Activated CD4-positive, alpha-beta T cell treated with anti-CD3 and anti-CD28 coated beads for 36 hours (primary cell): ENCODE measurements at regions of chr1 and their contacts with region 1.

Region 1: DNA sequence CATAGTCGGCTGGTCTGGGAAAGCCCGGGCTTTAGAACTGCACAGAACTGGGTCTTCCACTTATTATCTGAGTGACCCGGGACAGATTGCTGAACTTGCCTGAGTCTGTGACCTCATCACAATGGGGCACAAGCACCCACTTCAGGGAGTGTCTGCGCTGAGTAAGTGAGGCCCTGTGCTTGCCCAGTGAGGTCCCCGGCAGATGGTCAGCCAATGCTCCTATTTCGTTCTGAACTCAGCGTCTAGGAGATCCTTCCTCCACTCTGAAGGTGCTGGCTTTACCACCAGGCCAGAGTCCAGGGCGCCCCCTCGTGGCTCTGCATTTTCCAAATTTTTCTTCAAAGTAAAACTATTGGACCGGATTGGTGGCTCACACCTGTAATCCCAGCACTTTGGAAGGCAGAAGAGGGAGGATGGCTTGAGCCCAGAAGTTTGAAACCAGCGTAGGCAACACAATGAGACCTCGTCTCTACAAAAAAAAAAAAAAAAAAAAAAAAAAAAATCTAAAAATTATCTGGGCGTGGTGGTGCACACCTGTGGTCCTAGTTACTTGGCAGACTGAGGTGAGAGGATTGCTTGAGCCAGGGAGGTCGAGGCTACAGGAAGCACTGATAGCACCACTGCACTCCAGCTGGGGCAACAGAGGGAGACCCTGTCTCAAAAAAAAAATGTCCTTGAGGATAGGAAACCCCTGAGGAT is 61.7 kb downstream of the FCRL5 start:
- DNase-seq: peak; percentile 83
- ATAC-seq: no peak
- H3K4me3 Mint-ChIP-seq: no peak overlapping the region
- H3K27ac Mint-ChIP-seq: no peak overlapping the region
- H3K4me1 Mint-ChIP-seq: no peaks in the 10 kb centered on the region
- H3K27me3 Mint-ChIP-seq: peaks cover 20% of the 10 kb centered on the region

Region 2: DNA sequence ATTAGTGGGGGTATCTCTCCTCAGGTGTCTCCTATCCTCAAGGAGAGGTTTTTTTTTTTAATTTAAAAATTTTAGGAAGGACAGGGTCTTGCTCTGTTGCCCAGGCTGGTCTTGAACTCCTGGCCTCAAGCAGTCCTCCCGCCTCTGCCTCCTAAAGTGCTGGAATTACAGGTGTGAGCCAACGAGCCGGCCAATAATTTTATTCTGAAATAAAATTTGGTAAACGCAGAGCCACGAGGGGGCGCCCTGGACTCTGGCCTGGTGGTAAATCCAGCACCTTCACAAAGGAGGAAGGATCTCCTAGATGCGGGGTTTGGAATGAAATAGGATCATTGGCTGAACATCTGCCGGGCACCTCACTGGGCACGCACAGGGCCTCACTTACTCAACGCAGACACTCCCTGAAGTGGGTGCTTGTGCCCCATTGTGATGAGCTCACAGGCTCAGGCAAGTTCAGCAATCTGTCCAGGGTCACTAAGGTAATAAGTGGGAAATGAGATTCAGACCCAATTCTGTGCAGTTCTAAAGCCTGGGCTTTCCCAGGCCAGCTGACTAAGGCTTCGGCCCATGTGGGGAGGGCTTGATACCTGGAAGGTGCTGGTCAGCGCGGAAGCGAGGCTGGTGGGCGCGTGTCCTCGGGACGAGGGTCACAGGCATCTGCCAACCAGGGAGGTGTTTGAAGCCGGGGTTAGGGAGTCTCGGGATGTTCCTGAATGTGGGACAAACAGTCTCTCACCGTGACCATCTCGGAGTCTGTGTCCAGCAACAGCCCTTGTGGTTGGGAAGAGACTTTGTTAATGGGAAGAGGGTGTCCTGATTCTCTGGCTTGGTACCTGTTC is 319.7 kb before region 1 on chr1:
- CTCF ChIA-PET with region 1: interaction called, 6 read pairs
- POLR2A ChIA-PET with region 1: no interaction called
- intact Hi-C with region 1: loop called in 1 of 2 experiments (anchors 2 kb)
- DNase-seq: peak; percentile 74
- ATAC-seq: no peak
- H3K4me3 Mint-ChIP-seq: no peak overlapping the region
- H3K27ac Mint-ChIP-seq: no peak overlapping the region
- H3K4me1 Mint-ChIP-seq: no peaks in the 10 kb centered on the region
- H3K27me3 Mint-ChIP-seq: peaks cover 13% of the 10 kb centered on the region

Region 3: DNA sequence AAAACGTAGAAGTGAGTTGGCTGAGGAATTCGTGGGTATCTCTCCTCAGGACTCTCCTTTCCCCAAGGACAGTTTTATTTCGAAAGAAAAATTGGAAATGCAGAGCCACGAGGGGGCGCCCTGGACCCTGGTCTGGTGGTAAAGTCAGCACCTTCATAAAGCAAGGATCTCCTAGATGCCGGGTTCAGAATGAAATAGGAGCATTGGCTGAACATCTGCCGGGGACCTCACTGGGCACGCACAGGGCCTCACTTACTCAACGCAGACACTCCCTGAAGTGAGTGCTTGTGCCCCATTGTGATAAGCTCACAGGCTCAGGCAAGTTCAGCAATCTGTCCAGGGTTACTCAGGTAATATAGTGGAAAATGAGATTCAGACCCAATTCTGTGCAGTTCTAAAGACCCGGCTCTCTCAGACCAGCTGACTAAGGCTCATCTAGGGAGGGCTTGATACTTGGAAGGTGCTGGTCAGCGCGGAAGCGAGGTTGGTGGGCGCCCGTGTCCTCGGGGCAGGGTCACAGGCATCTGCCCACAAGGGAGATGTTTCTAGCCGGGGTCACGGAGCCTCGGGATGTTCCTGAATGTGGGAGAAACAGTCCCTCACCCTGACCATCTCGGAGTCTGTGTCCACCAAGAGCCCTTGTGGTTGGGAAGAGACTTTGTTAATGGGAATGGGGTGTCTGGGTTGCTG is 296.8 kb before region 1 on chr1:
- CTCF ChIA-PET with region 1: interaction called, 12 read pairs
- POLR2A ChIA-PET with region 1: no interaction called
- intact Hi-C with region 1: loop called (anchors 1 to 5 kb)
- DNase-seq: peak; percentile 83
- ATAC-seq: peak; percentile 59
- H3K4me3 Mint-ChIP-seq: no peak overlapping the region
- H3K27ac Mint-ChIP-seq: no peak overlapping the region
- H3K4me1 Mint-ChIP-seq: no peaks in the 10 kb centered on the region
- H3K27me3 Mint-ChIP-seq: peaks cover 30% of the 10 kb centered on the region

Region 4: GRCh38 chr1:157315544-157315943 is 175.1 kb before region 1 on chr1:
- CTCF ChIA-PET with region 1: no interaction called
- POLR2A ChIA-PET with region 1: no interaction called
- intact Hi-C with region 1: no loop called
- DNase-seq: no peak
- ATAC-seq: no peak
- H3K4me3 Mint-ChIP-seq: no peak overlapping the region
- H3K27ac Mint-ChIP-seq: no peak overlapping the region
- H3K4me1 Mint-ChIP-seq: no peaks in the 10 kb centered on the region
- H3K27me3 Mint-ChIP-seq: peaks cover 32% of the 10 kb centered on the region

Region 5: GRCh38 chr1:157369808-157370521 is 120.7 kb before region 1 on chr1:
- CTCF ChIA-PET with region 1: interaction called, 17 read pairs
- POLR2A ChIA-PET with region 1: no interaction called
- intact Hi-C with region 1: loop called (anchors 1 kb)
- DNase-seq: peak; percentile 54
- ATAC-seq: peak; percentile 64
- H3K4me3 Mint-ChIP-seq: no peak overlapping the region
- H3K27ac Mint-ChIP-seq: no peak overlapping the region
- H3K4me1 Mint-ChIP-seq: no peaks in the 10 kb centered on the region
- H3K27me3 Mint-ChIP-seq: peaks cover 4% of the 10 kb centered on the region

Region 6: GRCh38 chr1:157380523-157380922 is 110.1 kb before region 1 on chr1:
- CTCF ChIA-PET with region 1: interaction called, 4 read pairs
- POLR2A ChIA-PET with region 1: no interaction called
- intact Hi-C with region 1: loop called in 1 of 2 experiments (anchors 1 kb)
- DNase-seq: no peak
- ATAC-seq: no peak
- H3K4me3 Mint-ChIP-seq: no peak overlapping the region
- H3K27ac Mint-ChIP-seq: no peak overlapping the region
- H3K4me1 Mint-ChIP-seq: no peaks in the 10 kb centered on the region
- H3K27me3 Mint-ChIP-seq: peaks cover 19% of the 10 kb centered on the region